ENCODE measurements at regions of chr1 and their contacts with region 1.

Region 1: DNA sequence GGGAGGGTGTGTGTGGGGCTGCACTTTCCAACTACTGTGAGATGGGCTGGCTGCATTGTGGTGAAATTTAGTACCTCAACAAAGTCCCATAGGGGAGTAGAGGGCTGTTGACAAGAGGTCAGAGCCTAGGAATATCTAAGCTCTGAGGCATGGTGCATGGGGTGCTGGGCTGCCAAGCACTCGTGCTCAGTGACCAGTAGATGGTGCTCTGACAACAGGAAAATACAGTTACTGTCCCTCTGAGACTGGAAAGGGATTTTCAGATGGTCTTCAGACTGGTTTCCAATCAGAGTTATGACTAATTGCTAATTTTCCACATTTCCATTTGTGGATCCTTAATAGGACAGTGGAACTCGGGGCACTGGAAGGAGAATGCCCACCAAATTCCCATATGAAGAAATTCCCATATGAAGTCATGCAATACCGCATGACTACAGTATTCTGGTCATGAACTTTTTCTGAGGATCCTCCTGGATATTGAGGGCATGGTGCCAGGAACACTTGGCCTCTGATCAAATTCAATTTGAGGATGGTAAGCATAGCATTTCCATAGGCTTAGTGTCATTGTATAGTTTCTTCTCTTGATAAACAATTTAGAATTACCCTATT is 4.1 kb upstream of the CACNA1E start:
- DNase-seq: no peak
- H3K4me3 ChIP-seq: no peak overlapping the region
- H3K27ac ChIP-seq: no peak overlapping the region
- H3K4me1 ChIP-seq: peaks cover 9 to 20% (median 12%) of the 10 kb centered on the region in 3 donors
- H3K27me3 ChIP-seq: peaks cover 8 to 78% (median 14%) of the 10 kb centered on the region in 4 donors
- CTCF ChIP-seq: peak in 5 of 6 experiments; percentile 63 to 80 (median 67)
- POLR2A ChIP-seq: no peak

Region 2: DNA sequence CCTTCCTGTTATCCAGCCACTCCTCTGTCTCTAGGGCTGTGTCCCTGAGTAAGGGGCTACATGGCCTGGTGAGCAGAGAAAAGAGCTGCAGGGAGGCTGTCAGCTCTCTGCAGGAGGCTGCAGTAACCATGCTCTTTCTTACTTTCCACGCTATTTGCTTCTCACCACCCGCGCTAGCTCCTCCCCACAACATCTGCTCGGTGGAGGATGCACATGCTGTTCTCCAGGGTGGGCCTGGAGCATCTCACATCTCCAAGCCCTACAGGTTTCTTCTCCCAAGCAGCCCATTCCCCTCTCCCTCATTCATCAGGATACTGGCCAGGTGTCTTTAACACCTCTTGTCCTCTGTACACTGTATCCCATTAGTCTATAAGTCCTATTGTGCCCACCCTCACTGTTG is 286.9 kb before region 1 on chr1:
- intact Hi-C with region 1: no loop called
- DNase-seq: no peak
- H3K4me3 ChIP-seq: no peak overlapping the region
- H3K27ac ChIP-seq: no peak overlapping the region
- H3K4me1 ChIP-seq: peaks cover 0 to 10% (median 5%) of the 10 kb centered on the region in 3 donors
- H3K27me3 ChIP-seq: peaks cover 0 to 48% (median 0%) of the 10 kb centered on the region in 4 donors
- CTCF ChIP-seq: no peak
- POLR2A ChIP-seq: no peak

Region 3: GRCh38 chr1:181583598-181583997 is 104.4 kb after region 1 on chr1:
- intact Hi-C with region 1: no loop called
- DNase-seq: no peak
- H3K4me3 ChIP-seq: no peak overlapping the region
- H3K27ac ChIP-seq: no peak overlapping the region
- H3K4me1 ChIP-seq: no peaks in the 10 kb centered on the region
- H3K27me3 ChIP-seq: peaks cover 0 to 15% (median 0%) of the 10 kb centered on the region in 4 donors
- CTCF ChIP-seq: peak in 2 of 6 experiments; percentile 11 to 40
- POLR2A ChIP-seq: no peak

Region 4: DNA sequence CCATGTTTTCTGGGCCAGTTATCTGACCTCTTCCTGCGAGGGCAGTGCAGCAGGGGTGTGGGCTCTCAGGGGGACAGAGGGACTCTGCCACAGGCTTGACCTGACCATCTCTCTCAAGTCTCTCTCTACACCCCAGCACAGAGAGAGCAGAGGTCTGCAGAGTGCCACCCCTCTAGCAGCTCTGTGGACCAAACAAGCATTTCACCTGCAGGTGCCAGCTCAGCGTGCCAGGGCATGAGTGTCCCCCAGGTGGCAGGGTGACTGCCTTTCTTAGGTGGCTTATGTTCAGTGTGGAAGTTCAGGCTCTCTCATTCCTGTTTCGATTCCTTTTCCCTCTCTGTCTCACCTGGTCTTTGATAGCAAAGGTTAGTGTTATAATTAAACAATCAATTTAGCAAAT is 195.4 kb after region 1 on chr1:
- intact Hi-C with region 1: loop called (anchors 5 kb)
- DNase-seq: no peak
- H3K4me3 ChIP-seq: no peak overlapping the region
- H3K27ac ChIP-seq: no peak overlapping the region
- H3K4me1 ChIP-seq: no peaks in the 10 kb centered on the region
- H3K27me3 ChIP-seq: peaks cover 0 to 5% (median 0%) of the 10 kb centered on the region in 4 donors
- CTCF ChIP-seq: peak in 2 of 6 experiments; percentile 5 to 32
- POLR2A ChIP-seq: no peak

Region 5: GRCh38 chr1:181986907-181987305 is 507.7 kb after region 1 on chr1:
- intact Hi-C with region 1: no loop called
- DNase-seq: no peak
- H3K4me3 ChIP-seq: no peak overlapping the region
- H3K27ac ChIP-seq: no peak overlapping the region
- H3K4me1 ChIP-seq: no peaks in the 10 kb centered on the region
- H3K27me3 ChIP-seq: peaks cover 0 to 23% (median 0%) of the 10 kb centered on the region in 4 donors
- CTCF ChIP-seq: no peak
- POLR2A ChIP-seq: no peak

Region 6: GRCh38 chr1:182054698-182055326 is 575.6 kb after region 1 on chr1:
- intact Hi-C with region 1: loop called (anchors 10 kb)
- DNase-seq: no peak
- H3K4me3 ChIP-seq: no peak overlapping the region
- H3K27ac ChIP-seq: no peak overlapping the region
- H3K4me1 ChIP-seq: peaks cover 0 to 8% (median 0%) of the 10 kb centered on the region in 3 donors
- H3K27me3 ChIP-seq: peaks cover 0 to 34% (median 0%) of the 10 kb centered on the region in 4 donors
- CTCF ChIP-seq: peak in 4 of 6 experiments; percentile 32 to 55 (median 48)
- POLR2A ChIP-seq: no peak

Measured in esophagus squamous epithelium (tissue), 5 donors.